Activated CD4-positive, alpha-beta T cell treated with anti-CD3 and anti-CD28 coated beads for 36 hours (primary cell): ENCODE measurements at regions of chr14 and their contacts with region 1.

Region 1: DNA sequence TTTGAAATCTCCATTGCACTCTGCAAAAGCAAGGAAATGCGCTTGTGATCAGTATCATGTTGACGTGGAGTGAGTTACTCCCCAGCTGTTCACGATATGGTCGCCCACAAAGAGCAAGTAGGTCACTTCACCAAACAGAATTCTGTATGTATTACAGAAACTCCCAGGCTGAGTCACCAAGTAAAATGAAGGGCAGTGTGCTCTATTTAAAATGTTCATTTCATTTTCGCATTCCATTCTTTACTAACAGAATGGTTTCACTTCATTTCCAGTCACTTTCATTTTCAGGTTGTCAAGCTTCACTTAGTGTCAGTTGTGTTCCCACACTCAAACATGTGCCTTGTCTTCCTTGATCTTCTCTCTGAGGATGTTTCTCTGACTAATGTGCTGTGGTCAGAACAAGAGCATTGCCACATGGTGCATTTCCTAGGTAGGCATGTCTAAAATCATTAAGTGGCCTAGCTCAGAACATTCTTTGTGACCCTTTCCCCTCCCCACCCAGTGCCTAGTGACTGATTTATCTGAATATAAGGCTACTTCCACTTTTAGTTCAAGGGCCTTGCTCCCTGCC is 391.2 kb downstream of the RAD51B start:
- DNase-seq: peak; percentile 71
- ATAC-seq: peak; percentile 93
- H3K4me3 Mint-ChIP-seq: peak overlapping the region; percentile 43
- H3K27ac Mint-ChIP-seq: peak overlapping the region; percentile 84
- H3K4me1 Mint-ChIP-seq: peaks cover 53% of the 10 kb centered on the region
- H3K27me3 Mint-ChIP-seq: no peaks in the 10 kb centered on the region

Region 2: GRCh38 chr14:68181519-68182326 is 29.1 kb before region 1 on chr14:
- CTCF ChIA-PET with region 1: interaction called, 3 read pairs
- POLR2A ChIA-PET with region 1: no interaction called
- intact Hi-C with region 1: loop called in 1 of 2 experiments (anchors 1 kb)
- DNase-seq: no peak
- ATAC-seq: peak; percentile 31
- H3K4me3 Mint-ChIP-seq: no peak overlapping the region
- H3K27ac Mint-ChIP-seq: no peak overlapping the region
- H3K4me1 Mint-ChIP-seq: peaks cover 31% of the 10 kb centered on the region
- H3K27me3 Mint-ChIP-seq: no peaks in the 10 kb centered on the region

Region 3: GRCh38 chr14:68232300-68233055 is 21.7 kb after region 1 on chr14:
- CTCF ChIA-PET with region 1: interaction called, 12 read pairs
- POLR2A ChIA-PET with region 1: interaction called, 7 read pairs
- intact Hi-C with region 1: loop called (anchors 1 kb)
- DNase-seq: peak; percentile 62
- ATAC-seq: peak; percentile 83
- H3K4me3 Mint-ChIP-seq: no peak overlapping the region
- H3K27ac Mint-ChIP-seq: no peak overlapping the region
- H3K4me1 Mint-ChIP-seq: peaks cover 23% of the 10 kb centered on the region
- H3K27me3 Mint-ChIP-seq: no peaks in the 10 kb centered on the region

Region 4: GRCh38 chr14:68663385-68664076 is 452.7 kb after region 1 on chr14:
- CTCF ChIA-PET with region 1: no interaction called
- POLR2A ChIA-PET with region 1: no interaction called
- intact Hi-C with region 1: loop called in 1 of 2 experiments (anchors 1 kb)
- DNase-seq: peak; percentile 72
- ATAC-seq: peak; percentile 83
- H3K4me3 Mint-ChIP-seq: peak overlapping the region; percentile 30
- H3K27ac Mint-ChIP-seq: peak overlapping the region; percentile 81
- H3K4me1 Mint-ChIP-seq: peaks cover 53% of the 10 kb centered on the region
- H3K27me3 Mint-ChIP-seq: no peaks in the 10 kb centered on the region